Psoas muscle (tissue), 8 donors: ENCODE measurements at regions of chr17 and their contacts with region 1.

Region 1: GRCh38 chr17:68468334-68468733 is 11.0 kb upstream of the WIPI1 start:
- DNase-seq: no peak
- ATAC-seq: peak; percentile 48 to 83 (median 60)
- H3K4me3 ChIP-seq: no peak overlapping the region
- H3K27ac ChIP-seq: peak overlapping the region; percentile 82
- H3K4me1 ChIP-seq: peaks cover 6% of the 10 kb centered on the region
- H3K27me3 ChIP-seq: no peaks in the 10 kb centered on the region
- CTCF ChIP-seq: no peak

Region 2: DNA sequence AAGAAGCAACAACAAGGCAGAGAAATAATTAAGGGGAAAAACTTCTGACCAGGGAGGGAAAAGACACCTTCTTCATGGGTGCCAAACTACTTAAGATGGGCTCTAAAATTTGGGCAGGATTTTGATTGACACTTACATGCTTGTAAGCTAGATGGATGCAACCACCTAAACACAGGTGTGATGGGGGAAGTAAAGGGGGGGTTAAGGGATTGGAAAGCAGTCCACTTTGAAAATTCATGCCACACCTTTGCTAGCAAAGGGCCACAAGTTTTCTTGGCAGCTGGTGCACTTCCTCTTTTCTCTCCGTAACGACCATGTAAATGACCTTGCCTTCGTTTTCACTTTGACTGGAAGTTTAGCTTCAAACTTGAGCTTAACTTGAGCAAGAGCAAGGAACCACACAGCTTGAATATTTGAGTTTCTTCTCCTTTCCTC is 29.6 kb after region 1 on chr17:
- intact Hi-C with region 1: loop called in 1 of 2 experiments (anchors 1 kb)
- DNase-seq: no peak
- ATAC-seq: no peak
- H3K4me3 ChIP-seq: no peak overlapping the region
- H3K27ac ChIP-seq: no peak overlapping the region
- H3K4me1 ChIP-seq: peaks cover 3% of the 10 kb centered on the region
- H3K27me3 ChIP-seq: no peaks in the 10 kb centered on the region
- CTCF ChIP-seq: no peak